ENCODE measurements at regions of chr1 and their contacts with region 1.

Region 1: DNA sequence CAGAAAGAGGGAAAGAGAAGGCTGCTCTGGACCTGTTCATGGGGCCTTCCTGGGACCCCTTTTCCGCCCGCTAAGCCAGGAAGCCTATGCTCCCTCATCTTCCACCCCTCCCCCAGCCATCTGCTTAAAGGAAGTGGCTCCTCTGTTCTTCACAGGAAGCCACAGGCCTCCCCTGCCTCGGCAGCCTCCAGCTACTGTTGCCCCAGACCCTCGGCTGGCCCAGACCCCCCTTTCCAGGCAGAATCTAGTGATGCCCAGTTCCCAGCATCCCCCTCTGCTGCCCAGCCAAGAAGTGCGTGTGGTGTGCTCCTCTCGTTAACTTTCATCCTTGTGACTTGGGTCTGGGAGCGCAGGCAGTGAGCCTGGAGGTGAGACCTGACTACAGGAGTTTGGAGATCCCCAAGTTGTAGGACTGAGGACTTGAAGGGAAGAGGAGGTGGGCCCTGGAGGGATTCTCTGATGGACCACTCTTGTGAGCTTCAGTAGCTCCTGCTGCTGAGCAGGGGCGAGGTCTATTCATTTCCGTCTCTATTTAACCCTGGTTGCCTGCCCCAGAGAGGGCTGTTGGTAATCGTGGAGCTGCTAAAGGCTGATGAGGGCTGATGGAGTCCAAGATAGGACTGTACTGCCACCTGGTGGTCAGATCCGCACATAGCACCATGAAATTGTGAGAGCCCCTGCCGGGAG is 9.1 kb downstream of the IFI6 start:
- DNase-seq: peak; percentile 94
- ATAC-seq: peak; percentile 83
- H3K4me3 Mint-ChIP-seq: peak overlapping the region; percentile 75
- H3K27ac Mint-ChIP-seq: peak overlapping the region; percentile 98
- H3K4me1 Mint-ChIP-seq: peaks cover 68% of the 10 kb centered on the region
- H3K27me3 Mint-ChIP-seq: no peaks in the 10 kb centered on the region

Region 2: GRCh38 chr1:27525296-27526272 is 137.3 kb before region 1 on chr1:
- CTCF ChIA-PET with region 1: interaction called, 22 read pairs
- POLR2A ChIA-PET with region 1: interaction called, 3 read pairs
- DNase-seq: peak; percentile 85
- ATAC-seq: peak; percentile 56
- H3K4me3 Mint-ChIP-seq: peak overlapping the region; percentile 66
- H3K27ac Mint-ChIP-seq: peak overlapping the region; percentile 65
- H3K4me1 Mint-ChIP-seq: peaks cover 67% of the 10 kb centered on the region
- H3K27me3 Mint-ChIP-seq: no peaks in the 10 kb centered on the region

Region 3: DNA sequence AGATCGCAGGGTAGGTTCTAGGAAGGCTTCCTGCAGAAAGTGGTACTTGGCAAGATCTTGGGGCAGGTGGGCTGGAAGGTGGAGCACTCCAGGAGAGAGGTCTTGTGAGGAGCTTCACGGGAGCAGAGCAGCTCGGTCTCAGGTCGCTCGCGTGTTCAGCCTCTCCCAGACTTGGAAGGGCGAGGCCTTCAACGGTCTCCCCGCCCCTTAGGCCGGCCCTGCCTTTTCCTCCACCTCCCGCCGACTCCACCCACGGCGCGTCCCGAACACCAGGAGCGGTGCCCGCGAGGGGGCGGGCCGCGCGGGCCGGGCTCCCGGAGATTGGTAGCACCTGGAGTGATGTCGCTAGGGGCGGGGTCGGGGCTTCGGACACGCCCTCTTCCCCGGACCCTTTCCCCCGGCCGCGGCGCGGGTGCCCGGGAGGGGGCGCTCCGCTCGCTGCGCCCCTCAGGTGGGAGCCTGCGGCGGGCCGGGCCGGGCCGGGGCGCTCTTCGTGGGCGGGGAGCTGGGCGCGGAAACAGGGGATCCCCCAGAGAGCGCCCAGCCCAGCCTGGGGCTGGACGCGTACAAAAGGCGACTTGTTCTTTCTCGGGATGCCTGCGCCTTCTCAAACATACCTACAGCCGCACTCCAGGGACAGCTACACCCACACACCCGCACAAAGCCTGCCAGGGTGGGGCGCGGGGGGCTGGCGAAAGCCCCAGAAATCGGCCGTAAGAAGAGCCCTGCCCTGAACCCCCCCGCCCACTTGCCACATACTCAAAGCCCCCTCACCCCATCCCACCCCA is 94.4 kb before region 1 on chr1:
- CTCF ChIA-PET with region 1: interaction called, 25 read pairs
- POLR2A ChIA-PET with region 1: interaction called, 3 read pairs
- DNase-seq: peak; percentile 94
- ATAC-seq: peak; percentile 98
- H3K4me3 Mint-ChIP-seq: peak overlapping the region; percentile 64
- H3K27ac Mint-ChIP-seq: peak overlapping the region; percentile 46
- H3K4me1 Mint-ChIP-seq: peaks cover 29% of the 10 kb centered on the region
- H3K27me3 Mint-ChIP-seq: no peaks in the 10 kb centered on the region

Region 4: DNA sequence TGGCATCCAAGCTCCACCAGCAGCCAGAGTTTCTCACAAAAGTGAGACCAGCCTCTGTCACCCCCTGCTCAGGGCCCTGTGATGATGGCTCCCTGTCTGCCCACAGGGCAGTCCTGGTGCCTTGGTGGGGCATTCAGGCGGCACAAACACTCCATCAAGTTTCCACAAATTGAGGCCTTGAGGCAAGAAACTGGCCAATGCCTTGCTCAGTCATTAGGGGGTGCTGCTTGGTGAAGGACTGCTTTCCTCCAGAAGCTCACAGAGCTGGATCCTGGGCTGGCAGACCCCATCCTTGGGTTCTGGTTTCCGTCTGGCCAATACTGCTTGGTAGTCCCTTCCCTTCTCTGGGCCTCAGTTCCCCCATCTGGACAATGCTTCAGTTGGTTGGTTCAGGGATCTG is 46.4 kb before region 1 on chr1:
- CTCF ChIA-PET with region 1: interaction called, 124 read pairs
- POLR2A ChIA-PET with region 1: interaction called, 81 read pairs
- DNase-seq: no peak
- ATAC-seq: no peak
- H3K4me3 Mint-ChIP-seq: no peak overlapping the region
- H3K27ac Mint-ChIP-seq: no peak overlapping the region
- H3K4me1 Mint-ChIP-seq: peaks cover 49% of the 10 kb centered on the region
- H3K27me3 Mint-ChIP-seq: peaks cover 5% of the 10 kb centered on the region

Region 5: GRCh38 chr1:27632387-27633297 is 30.2 kb before region 1 on chr1:
- CTCF ChIA-PET with region 1: interaction called, 51 read pairs
- POLR2A ChIA-PET with region 1: interaction called, 8 read pairs
- DNase-seq: peak; percentile 77
- ATAC-seq: peak; percentile 72
- H3K4me3 Mint-ChIP-seq: peak overlapping the region; percentile 55
- H3K27ac Mint-ChIP-seq: peak overlapping the region; percentile 75
- H3K4me1 Mint-ChIP-seq: peaks cover 76% of the 10 kb centered on the region
- H3K27me3 Mint-ChIP-seq: peaks cover 7% of the 10 kb centered on the region

Region 6: GRCh38 chr1:27650539-27651175 is 12.2 kb before region 1 on chr1:
- CTCF ChIA-PET with region 1: interaction called, 22 read pairs
- POLR2A ChIA-PET with region 1: interaction called, 6 read pairs
- DNase-seq: no peak
- ATAC-seq: no peak
- H3K4me3 Mint-ChIP-seq: no peak overlapping the region
- H3K27ac Mint-ChIP-seq: no peak overlapping the region
- H3K4me1 Mint-ChIP-seq: peaks cover 13% of the 10 kb centered on the region
- H3K27me3 Mint-ChIP-seq: no peaks in the 10 kb centered on the region